Activated naive CD4-positive, alpha-beta T cell treated with anti-CD3 and anti-CD28 coated beads for 36 hours (primary cell): ENCODE measurements at regions of chr4 and their contacts with region 1.

Region 1: DNA sequence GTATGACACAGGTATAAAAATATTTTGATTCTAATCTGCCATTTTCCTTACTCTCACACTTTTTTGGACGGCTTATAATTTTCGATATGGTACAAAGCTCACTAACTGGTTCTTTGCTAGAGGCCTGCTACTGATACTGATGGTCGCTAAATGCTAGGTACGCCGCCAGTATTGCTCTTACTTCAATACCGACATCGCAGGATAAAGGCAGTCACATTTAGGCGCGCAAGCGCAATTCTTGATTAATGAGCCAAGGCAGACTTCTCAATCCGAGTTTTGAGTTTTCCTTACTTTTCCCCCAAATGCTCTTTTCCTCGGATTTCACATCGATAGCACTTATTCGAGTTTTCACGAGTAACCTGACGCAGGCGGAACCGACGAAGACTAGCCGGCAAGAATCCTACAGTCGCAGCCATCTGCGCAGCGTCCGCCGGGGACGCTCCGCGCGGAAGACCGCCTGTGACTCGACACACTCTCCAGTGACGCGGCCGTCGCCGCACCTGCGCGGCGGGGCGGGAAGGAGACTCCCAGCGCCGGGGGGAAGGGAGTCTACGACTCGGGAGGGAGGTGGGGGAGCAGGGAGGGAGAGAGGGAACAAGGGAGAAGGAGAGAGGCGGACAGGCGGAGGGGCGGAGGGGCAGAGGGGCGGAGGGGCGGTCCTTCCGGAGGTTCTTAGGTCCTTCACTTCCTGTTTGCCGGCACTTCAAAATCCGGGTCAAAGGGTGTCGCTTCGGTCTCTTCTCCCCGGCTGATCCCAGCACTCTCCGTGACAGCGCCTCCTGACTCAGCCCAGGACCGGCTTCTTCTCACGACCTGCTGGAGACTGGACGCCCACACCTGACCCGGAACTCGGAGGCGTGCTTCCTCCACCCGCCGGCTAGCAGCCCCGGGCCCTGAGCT is at the start of gene USP38:
- DNase-seq: peak; percentile 93
- H3K4me3 Mint-ChIP-seq: peak within 1 kb of the TSS; percentile 95
- H3K27ac Mint-ChIP-seq: peak within 1 kb of the TSS; percentile 97
- H3K4me1 Mint-ChIP-seq: peaks cover 40% of the 10 kb centered on the region
- H3K27me3 Mint-ChIP-seq: no peaks in the 10 kb centered on the region
- total RNA-seq, gene USP38: 14.4 to 15.5 TPM

Region 2: GRCh38 chr4:141220655-141221605 is 1963.5 kb before region 1 on chr4 and contains the start of gene ZNF330:
- CTCF ChIA-PET with region 1: no interaction called
- intact Hi-C with region 1: loop called (anchors 2 kb)
- DNase-seq: peak; percentile 89
- H3K4me3 Mint-ChIP-seq: peak within 1 kb of the TSS; percentile 94
- H3K27ac Mint-ChIP-seq: peak within 1 kb of the TSS; percentile 94
- H3K4me1 Mint-ChIP-seq: peaks cover 43% of the 10 kb centered on the region
- H3K27me3 Mint-ChIP-seq: no peaks in the 10 kb centered on the region
- total RNA-seq, gene ZNF330: 67.2 to 75.5 TPM

Region 3: DNA sequence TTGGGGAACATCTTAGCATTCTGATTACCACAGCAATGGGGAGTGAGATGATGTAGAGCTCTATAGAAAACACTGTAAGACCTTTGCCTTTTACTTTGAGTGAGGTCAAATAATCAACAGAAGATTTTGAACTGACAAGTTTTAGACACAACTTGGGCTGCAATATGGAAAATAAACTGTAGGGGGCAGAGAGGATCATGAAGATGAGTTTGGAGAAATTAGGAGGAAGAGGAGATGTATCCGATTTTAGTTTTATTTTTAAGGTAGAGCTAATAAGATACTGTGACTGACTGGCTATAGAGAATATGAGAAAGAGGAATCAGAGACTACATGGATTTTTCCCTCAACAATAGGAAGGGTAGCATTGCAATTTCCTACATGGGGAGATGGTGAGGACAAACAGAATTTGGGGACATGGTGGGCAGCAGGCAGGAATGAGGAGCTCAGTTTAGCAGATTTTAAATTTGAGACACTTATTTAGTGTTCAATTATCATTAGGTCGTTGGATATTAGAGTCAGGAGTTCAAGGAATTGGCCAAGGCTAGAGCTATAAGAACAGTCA is 901.5 kb before region 1 on chr4:
- CTCF ChIA-PET with region 1: no interaction called
- intact Hi-C with region 1: loop called (anchors 10 kb)
- DNase-seq: peak; percentile 60
- H3K4me3 Mint-ChIP-seq: no peak overlapping the region
- H3K27ac Mint-ChIP-seq: no peak overlapping the region
- H3K4me1 Mint-ChIP-seq: peaks cover 29% of the 10 kb centered on the region
- H3K27me3 Mint-ChIP-seq: no peaks in the 10 kb centered on the region

Region 4: DNA sequence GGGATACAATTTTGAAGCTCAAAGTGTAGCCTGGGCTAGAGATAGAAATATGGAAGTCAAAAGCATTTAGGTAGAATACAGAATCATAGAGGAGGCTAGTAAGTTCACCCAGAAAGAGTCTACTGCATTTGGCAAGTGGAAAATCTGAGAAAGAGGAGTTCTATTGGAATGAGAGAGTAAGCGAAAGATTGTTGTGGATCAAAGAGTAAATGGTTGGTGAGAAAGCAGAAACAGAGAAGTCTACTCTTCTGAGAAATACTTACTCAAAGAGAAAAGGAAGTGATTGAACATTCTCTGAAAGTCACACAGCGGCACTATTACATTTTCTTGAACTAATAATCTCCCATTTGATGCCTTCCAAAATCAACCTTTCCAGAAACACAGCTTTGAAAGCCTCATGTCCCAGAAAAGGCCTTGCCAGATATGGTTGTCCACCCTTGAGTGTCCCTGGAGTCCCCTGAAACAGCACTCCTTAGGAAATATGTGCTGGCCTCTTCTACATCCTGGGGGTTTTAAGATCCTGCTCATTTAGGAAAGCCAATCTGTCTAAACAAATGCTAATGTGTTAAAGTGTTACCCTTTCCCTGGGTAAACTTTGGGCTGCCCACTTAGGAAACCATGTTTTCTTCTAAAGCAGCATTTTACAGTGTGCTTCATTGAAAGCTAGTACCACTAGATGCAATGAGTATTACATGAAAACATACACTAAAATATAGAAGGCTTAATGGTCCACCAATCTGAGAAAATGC is 471.0 kb before region 1 on chr4:
- CTCF ChIA-PET with region 1: no interaction called
- intact Hi-C with region 1: loop called (anchors 5 kb)
- DNase-seq: no peak
- H3K4me3 Mint-ChIP-seq: peak overlapping the region; percentile 9
- H3K27ac Mint-ChIP-seq: peak overlapping the region; percentile 92
- H3K4me1 Mint-ChIP-seq: peaks cover 76% of the 10 kb centered on the region
- H3K27me3 Mint-ChIP-seq: no peaks in the 10 kb centered on the region

Region 5: GRCh38 chr4:143358923-143359643 is 174.6 kb after region 1 on chr4:
- CTCF ChIA-PET with region 1: no interaction called
- intact Hi-C with region 1: loop called (anchors 1 kb)
- DNase-seq: peak; percentile 69
- H3K4me3 Mint-ChIP-seq: peak overlapping the region; percentile 32
- H3K27ac Mint-ChIP-seq: peak overlapping the region; percentile 72
- H3K4me1 Mint-ChIP-seq: peaks cover 21% of the 10 kb centered on the region
- H3K27me3 Mint-ChIP-seq: no peaks in the 10 kb centered on the region